ENCODE measurements at regions of chr13 and their contacts with region 1.

Region 1: GRCh38 chr13:37058910-37059847 is at the start of gene SUPT20H:
- DNase-seq: peak; percentile 94
- ATAC-seq: peak; percentile 94
- H3K4me3 ChIP-seq: peak within 1 kb of the TSS; percentile 79 to 91 (median 87)
- H3K4me3 Mint-ChIP-seq: peak within 1 kb of the TSS; percentile 96
- H3K27ac ChIP-seq: peak within 1 kb of the TSS; percentile 81 to 92
- H3K27ac Mint-ChIP-seq: peak within 1 kb of the TSS; percentile 98
- H3K4me1 ChIP-seq: peaks cover 14 to 17% of the 10 kb centered on the region in 2 donors
- H3K4me1 Mint-ChIP-seq: peaks cover 29% of the 10 kb centered on the region
- H3K27me3 ChIP-seq: no peaks in the 10 kb centered on the region
- H3K27me3 Mint-ChIP-seq: no peaks in the 10 kb centered on the region
- CTCF ChIP-seq: no peak
- total RNA-seq, gene SUPT20H: 85.5 and 93.7 TPM in 2 replicates

Region 2: GRCh38 chr13:36346222-36347083 is 712.7 kb before region 1 on chr13 and contains the start of gene SPART:
- CTCF ChIA-PET with region 1: no interaction called
- POLR2A ChIA-PET with region 1: no interaction called
- intact Hi-C with region 1: loop called (anchors 2 kb)
- DNase-seq: peak; percentile 92
- ATAC-seq: peak; percentile 85
- H3K4me3 ChIP-seq: peak within 1 kb of the TSS; percentile 64 to 98 (median 85)
- H3K4me3 Mint-ChIP-seq: peak within 1 kb of the TSS; percentile 95
- H3K27ac ChIP-seq: peak within 1 kb of the TSS; percentile 93 to 96
- H3K27ac Mint-ChIP-seq: peak within 1 kb of the TSS; percentile 96
- H3K4me1 ChIP-seq: peaks cover 10 to 16% of the 10 kb centered on the region in 2 donors
- H3K4me1 Mint-ChIP-seq: peaks cover 24% of the 10 kb centered on the region
- H3K27me3 ChIP-seq: no peaks in the 10 kb centered on the region
- H3K27me3 Mint-ChIP-seq: peaks cover 14% of the 10 kb centered on the region
- CTCF ChIP-seq: peak; percentile 88
- total RNA-seq, gene SPART: 18.6 and 20.8 TPM in 2 replicates

Region 3: GRCh38 chr13:36818804-36819738 is 240.1 kb before region 1 on chr13 and contains the start of gene RFXAP:
- CTCF ChIA-PET with region 1: no interaction called
- POLR2A ChIA-PET with region 1: interaction called, 5 read pairs
- intact Hi-C with region 1: loop called (anchors 1 kb)
- DNase-seq: peak; percentile 95
- ATAC-seq: peak; percentile 93
- H3K4me3 ChIP-seq: peak within 1 kb of the TSS; percentile 54 to 96 (median 69)
- H3K4me3 Mint-ChIP-seq: peak within 1 kb of the TSS; percentile 97
- H3K27ac ChIP-seq: peak within 1 kb of the TSS; percentile 45 to 79
- H3K27ac Mint-ChIP-seq: peak within 1 kb of the TSS; percentile 91
- H3K4me1 ChIP-seq: peaks cover 19 to 22% of the 10 kb centered on the region in 2 donors
- H3K4me1 Mint-ChIP-seq: peaks cover 47% of the 10 kb centered on the region
- H3K27me3 ChIP-seq: peaks cover 0 to 5% (median 2%) of the 10 kb centered on the region in 4 experiments
- H3K27me3 Mint-ChIP-seq: peaks cover 11% of the 10 kb centered on the region
- CTCF ChIP-seq: peak; percentile 21
- total RNA-seq, gene RFXAP: 9.6 and 13.5 TPM in 2 replicates

Region 4: GRCh38 chr13:36999054-36999714 is 60.0 kb before region 1 on chr13 and contains the start of gene ALG5:
- CTCF ChIA-PET with region 1: interaction called, 4 read pairs
- POLR2A ChIA-PET with region 1: interaction called, 16 read pairs
- intact Hi-C with region 1: loop called (anchors 1 kb)
- DNase-seq: peak; percentile 94
- ATAC-seq: peak; percentile 76
- H3K4me3 ChIP-seq: peak within 1 kb of the TSS; percentile 89 to 100 (median 97)
- H3K4me3 Mint-ChIP-seq: peak within 1 kb of the TSS; percentile 100
- H3K27ac ChIP-seq: peak within 1 kb of the TSS; percentile 97 to 98
- H3K27ac Mint-ChIP-seq: peak within 1 kb of the TSS; percentile 100
- H3K4me1 ChIP-seq: peaks cover 15 to 16% of the 10 kb centered on the region in 2 donors
- H3K4me1 Mint-ChIP-seq: peaks cover 38% of the 10 kb centered on the region
- H3K27me3 ChIP-seq: no peaks in the 10 kb centered on the region
- H3K27me3 Mint-ChIP-seq: no peaks in the 10 kb centered on the region
- CTCF ChIP-seq: peak; percentile 98
- total RNA-seq, gene ALG5: 16.4 and 21.0 TPM in 2 replicates

Region 5: DNA sequence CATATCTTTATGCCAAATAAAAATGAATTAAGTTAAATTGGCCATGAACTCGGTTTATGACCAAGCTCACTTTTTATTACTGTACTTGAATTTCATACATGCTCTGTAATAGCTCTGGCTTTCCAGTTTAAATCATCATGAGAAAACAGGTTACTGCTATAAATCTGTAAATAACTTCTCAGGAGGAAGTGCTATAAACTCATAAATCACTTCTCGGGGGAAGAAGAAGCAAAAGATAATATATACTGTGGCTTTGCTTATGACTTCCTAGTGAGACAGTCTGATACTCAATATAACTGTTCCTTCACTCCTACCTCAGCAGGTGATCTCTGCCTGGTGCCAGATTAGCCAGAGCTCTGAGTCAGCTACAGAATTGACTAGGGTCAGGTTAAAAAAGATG is 12.1 kb before region 1 on chr13:
- CTCF ChIA-PET with region 1: no interaction called
- POLR2A ChIA-PET with region 1: no interaction called
- intact Hi-C with region 1: no loop called
- DNase-seq: no peak
- ATAC-seq: no peak
- H3K4me3 ChIP-seq: no peak overlapping the region
- H3K4me3 Mint-ChIP-seq: no peak overlapping the region
- H3K27ac ChIP-seq: no peak overlapping the region
- H3K27ac Mint-ChIP-seq: no peak overlapping the region
- H3K4me1 ChIP-seq: no peaks in the 10 kb centered on the region
- H3K4me1 Mint-ChIP-seq: peaks cover 10% of the 10 kb centered on the region
- H3K27me3 ChIP-seq: no peaks in the 10 kb centered on the region
- H3K27me3 Mint-ChIP-seq: no peaks in the 10 kb centered on the region
- CTCF ChIP-seq: no peak

Region 6: DNA sequence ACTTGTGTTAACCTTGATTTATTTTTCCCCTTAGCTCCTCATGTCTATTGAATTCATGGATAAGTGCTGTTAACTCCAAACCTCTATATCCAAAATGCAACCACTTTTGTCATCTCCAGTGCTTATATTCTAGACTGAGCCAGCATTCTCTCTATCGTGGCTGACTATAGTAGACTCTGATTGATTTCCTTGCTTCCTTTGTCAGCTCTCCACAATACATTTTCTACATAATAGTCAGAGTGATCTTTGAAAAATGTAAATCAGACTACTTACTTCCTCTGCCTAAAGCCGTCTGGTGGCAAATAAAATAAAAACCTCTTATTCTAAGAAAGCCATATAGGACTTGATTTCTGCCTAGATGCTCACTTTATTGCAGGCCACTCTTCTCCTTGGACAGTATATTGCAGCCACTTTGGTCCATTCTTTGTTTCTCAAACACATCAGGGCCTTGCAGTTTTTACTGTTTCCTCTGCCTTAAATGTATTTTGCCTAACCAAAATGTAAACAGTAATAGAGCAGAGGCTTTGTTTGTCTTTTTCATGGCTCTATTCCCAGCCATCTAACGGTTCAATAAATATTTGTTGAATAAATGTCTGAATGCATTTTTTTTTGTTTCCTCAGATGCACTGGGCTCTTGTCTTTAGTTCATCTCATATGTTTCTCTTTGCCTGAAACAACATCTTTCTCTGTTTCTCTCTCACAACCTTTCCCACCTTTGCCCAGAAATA is 289.9 kb after region 1 on chr13:
- CTCF ChIA-PET with region 1: no interaction called
- POLR2A ChIA-PET with region 1: no interaction called
- intact Hi-C with region 1: no loop called
- DNase-seq: no peak
- ATAC-seq: no peak
- H3K4me3 ChIP-seq: no peak overlapping the region
- H3K4me3 Mint-ChIP-seq: no peak overlapping the region
- H3K27ac ChIP-seq: no peak overlapping the region
- H3K27ac Mint-ChIP-seq: no peak overlapping the region
- H3K4me1 ChIP-seq: no peaks in the 10 kb centered on the region
- H3K4me1 Mint-ChIP-seq: no peaks in the 10 kb centered on the region
- H3K27me3 ChIP-seq: no peaks in the 10 kb centered on the region
- H3K27me3 Mint-ChIP-seq: no peaks in the 10 kb centered on the region
- CTCF ChIP-seq: no peak

Region 7: DNA sequence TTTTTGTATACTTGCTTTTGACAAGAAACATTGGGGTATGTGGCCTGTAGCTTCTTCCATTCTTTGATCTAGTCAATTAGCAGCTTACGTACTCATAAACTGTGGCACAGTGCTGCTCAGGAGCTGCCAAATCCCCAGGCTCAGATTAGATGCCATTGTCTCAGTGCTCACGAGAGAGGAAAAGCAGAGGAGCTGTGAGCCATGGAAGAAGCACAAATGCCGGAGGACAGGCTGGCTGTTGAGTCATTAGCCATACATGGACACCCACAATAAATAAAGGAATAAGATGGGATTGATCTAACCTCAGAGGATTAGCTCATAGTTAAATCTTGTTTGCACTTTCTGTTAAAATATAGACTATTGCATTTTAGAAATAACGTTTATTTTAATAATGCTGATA is 417.7 kb after region 1 on chr13:
- CTCF ChIA-PET with region 1: no interaction called
- POLR2A ChIA-PET with region 1: no interaction called
- intact Hi-C with region 1: no loop called
- DNase-seq: no peak
- ATAC-seq: no peak
- H3K4me3 ChIP-seq: no peak overlapping the region
- H3K4me3 Mint-ChIP-seq: no peak overlapping the region
- H3K27ac ChIP-seq: no peak overlapping the region
- H3K27ac Mint-ChIP-seq: no peak overlapping the region
- H3K4me1 ChIP-seq: no peaks in the 10 kb centered on the region
- H3K4me1 Mint-ChIP-seq: no peaks in the 10 kb centered on the region
- H3K27me3 ChIP-seq: no peaks in the 10 kb centered on the region
- H3K27me3 Mint-ChIP-seq: no peaks in the 10 kb centered on the region
- CTCF ChIP-seq: no peak

Region 8: DNA sequence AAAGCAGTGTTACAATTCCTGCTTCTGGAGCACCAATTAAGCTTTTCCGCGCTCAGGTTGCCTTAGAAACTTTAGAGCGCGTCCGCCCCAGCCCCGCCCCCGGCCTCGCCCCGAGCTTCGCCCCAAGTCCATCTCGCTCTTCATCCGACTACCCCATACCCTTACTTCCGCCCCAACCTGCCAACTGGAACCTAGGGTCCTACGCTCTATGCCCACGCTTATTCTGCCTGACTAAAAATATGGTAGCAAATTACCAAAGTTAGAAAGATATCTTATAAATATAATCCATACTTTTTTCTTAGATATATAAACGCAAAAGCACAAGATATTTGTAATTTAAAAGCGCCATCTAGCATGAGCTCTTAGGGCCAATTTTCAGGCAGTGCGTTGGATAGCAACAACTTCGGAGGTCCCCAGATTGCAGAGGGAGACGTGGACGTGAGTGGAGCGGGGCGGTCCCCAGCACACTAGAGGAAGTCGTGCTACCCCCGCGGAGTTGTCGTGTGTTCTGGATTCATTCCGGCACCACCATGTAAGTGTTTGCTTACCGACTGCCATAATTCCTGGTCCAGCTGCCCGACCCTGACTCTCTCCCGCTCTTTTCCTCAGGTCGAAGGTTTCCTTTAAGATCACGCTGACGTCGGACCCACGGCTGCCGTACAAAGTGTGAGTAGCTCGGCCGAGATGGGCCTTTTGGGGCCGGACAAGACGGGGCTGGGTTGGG is 1290.4 kb after region 1 on chr13 and contains the start of gene UFM1:
- CTCF ChIA-PET with region 1: no interaction called
- POLR2A ChIA-PET with region 1: no interaction called
- intact Hi-C with region 1: loop called (anchors 1 kb)
- DNase-seq: peak; percentile 95
- ATAC-seq: peak; percentile 96
- H3K4me3 ChIP-seq: peak within 1 kb of the TSS; percentile 74 to 98 (median 92)
- H3K4me3 Mint-ChIP-seq: peak within 1 kb of the TSS; percentile 99
- H3K27ac ChIP-seq: peak within 1 kb of the TSS; percentile 92 to 93
- H3K27ac Mint-ChIP-seq: peak within 1 kb of the TSS; percentile 98
- H3K4me1 ChIP-seq: peaks cover 21 to 22% of the 10 kb centered on the region in 2 donors
- H3K4me1 Mint-ChIP-seq: peaks cover 38% of the 10 kb centered on the region
- H3K27me3 ChIP-seq: no peaks in the 10 kb centered on the region
- H3K27me3 Mint-ChIP-seq: no peaks in the 10 kb centered on the region
- CTCF ChIP-seq: no peak
- total RNA-seq, gene UFM1: 61.6 and 66.4 TPM in 2 replicates

Region 9: DNA sequence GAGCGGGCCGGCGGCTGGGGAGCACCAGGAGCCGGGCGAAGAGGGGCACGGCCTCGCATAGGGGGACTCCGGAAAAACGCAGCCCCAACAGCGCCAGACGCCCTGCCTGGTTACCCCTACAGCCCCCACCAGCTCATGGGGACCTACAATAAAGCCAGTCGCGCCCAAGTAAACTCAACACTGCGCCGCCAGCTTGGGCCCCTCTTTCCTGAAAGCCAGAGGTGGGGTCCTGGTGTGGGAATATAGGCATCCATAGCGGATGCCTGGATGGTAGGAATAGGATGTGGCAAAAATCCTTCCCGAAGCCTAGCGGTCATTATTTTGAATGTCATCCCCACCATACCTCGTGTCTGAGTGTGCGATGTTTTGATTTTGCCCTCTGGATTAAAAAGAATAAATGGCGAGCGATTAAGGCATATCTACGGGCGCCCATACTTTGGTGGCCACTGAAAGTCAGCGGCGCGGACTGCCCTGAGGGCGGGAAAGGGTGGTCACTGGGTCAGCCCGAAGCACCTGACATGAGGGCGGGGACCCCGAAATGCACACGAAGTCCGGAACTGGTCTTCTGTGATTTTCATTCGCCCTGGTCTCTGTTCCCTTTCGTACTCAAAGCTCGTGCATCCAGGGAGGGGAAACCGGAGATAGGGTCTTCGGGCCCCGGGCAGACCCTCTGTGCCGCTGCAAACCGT is 1978.8 kb after region 1 on chr13 and contains the starts of genes NHLRC3 and PROSER1:
- CTCF ChIA-PET with region 1: no interaction called
- POLR2A ChIA-PET with region 1: no interaction called
- intact Hi-C with region 1: loop called (anchors 1 kb)
- DNase-seq: peak; percentile 92
- ATAC-seq: peak; percentile 84
- H3K4me3 ChIP-seq: peak within 1 kb of the TSS; percentile 67 to 99 (median 90)
- H3K4me3 Mint-ChIP-seq: peak within 1 kb of the TSS; percentile 92
- H3K27ac ChIP-seq: peak within 1 kb of the TSS; percentile 81 to 95
- H3K27ac Mint-ChIP-seq: peak within 1 kb of the TSS; percentile 100
- H3K4me1 ChIP-seq: peaks cover 30 to 35% of the 10 kb centered on the region in 2 donors
- H3K4me1 Mint-ChIP-seq: peaks cover 55% of the 10 kb centered on the region
- H3K27me3 ChIP-seq: no peaks in the 10 kb centered on the region
- H3K27me3 Mint-ChIP-seq: no peaks in the 10 kb centered on the region
- CTCF ChIP-seq: no peak
- total RNA-seq, gene NHLRC3: 38.8 and 41.9 TPM in 2 replicates
- total RNA-seq, gene PROSER1: 63.5 and 64.0 TPM in 2 replicates

Measured in B cell (primary cell).